ENCODE measurements at regions of chr3 and their contacts with region 1.

Region 1: GRCh38 chr3:85567071-85567676 is 608.4 kb downstream of the CADM2 start:
- DNase-seq: peak; percentile 38
- ATAC-seq: peak; percentile 84
- H3K4me3 ChIP-seq: no peak overlapping the region
- H3K27ac ChIP-seq: no peak overlapping the region
- H3K4me1 ChIP-seq: no peaks in the 10 kb centered on the region
- H3K27me3 ChIP-seq: no peaks in the 10 kb centered on the region
- CTCF ChIP-seq: peak; percentile 68
- EP300 ChIP-seq: no peak
- POLR2A ChIP-seq: no peak
- RAD21 ChIP-seq: no peak

Region 2: DNA sequence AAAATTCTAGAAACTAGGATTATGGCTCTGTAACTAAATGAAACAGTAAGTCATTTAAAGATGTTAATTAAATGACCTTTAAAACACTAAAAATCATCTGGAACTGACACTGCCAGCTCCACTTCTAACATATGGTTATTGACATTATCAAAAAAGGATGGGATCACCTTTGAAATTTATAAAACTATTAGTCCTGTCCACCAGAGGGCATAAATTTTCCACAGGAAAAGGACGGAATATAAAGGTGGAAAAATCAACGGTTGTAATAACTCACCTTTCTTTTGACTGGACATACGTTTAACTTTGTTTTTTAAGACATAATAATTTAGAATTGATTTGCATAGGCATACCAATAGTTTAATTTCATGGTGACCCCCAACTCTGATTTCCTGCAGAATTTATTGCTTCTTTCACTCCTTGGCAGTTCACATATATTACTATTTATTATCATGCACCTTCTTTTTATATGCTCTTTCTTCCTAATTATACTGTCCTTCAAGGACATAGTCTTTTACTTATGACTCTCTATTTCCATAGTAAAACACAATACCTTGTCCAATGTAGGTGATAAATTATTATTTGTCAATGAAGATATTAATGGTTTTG is 262.7 kb before region 1 on chr3:
- CTCF ChIA-PET with region 1: no interaction called
- POLR2A ChIA-PET with region 1: no interaction called
- in situ Hi-C with region 1: loop called (anchors 10 kb)
- intact Hi-C with region 1: loop called (anchors 2 kb)
- DNase-seq: peak; percentile 3
- ATAC-seq: peak; percentile 32; the same call in 1 of the 3 replicates
- H3K4me3 ChIP-seq: no peak overlapping the region
- H3K27ac ChIP-seq: no peak overlapping the region
- H3K4me1 ChIP-seq: no peaks in the 10 kb centered on the region
- H3K27me3 ChIP-seq: no peaks in the 10 kb centered on the region; a peak in 1 of 5 replicates
- CTCF ChIP-seq: peak; percentile 32
- EP300 ChIP-seq: no peak
- POLR2A ChIP-seq: no peak
- RAD21 ChIP-seq: no peak